ENCODE measurements at regions of chr4 and their contacts with region 1.

Region 1: GRCh38 chr4:8391972-8392371 is 48.6 kb downstream of the ACOX3 start:
- DNase-seq: peak in 7 of 10 donors; percentile 60 to 77 (median 68)
- H3K4me3 ChIP-seq: peak overlapping the region in 1 of 59 donors; percentile 22
- H3K27ac ChIP-seq: peak overlapping the region in 58 of 59 donors; percentile 10 to 99 (median 90)
- H3K27me3 ChIP-seq: no peaks in the 10 kb centered on the region
- CTCF ChIP-seq: peak in 3 of 56 donors; percentile 9 to 17 (median 11)

Region 2: DNA sequence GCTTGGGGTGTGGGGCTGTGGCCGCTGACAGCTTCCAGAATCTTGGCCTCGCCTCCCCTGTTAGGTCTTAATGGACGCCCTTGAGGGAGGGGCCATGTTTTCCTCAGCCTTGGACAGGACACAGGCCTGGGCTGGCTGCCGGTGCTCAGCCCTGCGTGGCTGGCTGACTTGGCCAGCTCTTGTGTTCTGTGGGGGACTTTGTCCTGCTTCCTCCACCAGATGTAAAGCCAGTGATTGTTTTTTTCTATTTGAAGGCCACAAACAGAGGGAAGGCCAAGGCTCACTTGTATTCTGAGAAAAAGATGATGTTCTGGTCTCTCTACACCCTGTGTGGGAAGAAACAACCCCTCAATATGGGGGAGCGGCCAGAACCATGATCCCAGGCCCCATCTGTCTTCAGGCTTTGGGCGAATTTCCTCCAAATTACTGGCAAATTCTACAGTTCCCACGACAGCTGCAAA is 51.2 kb before region 1 on chr4:
- intact Hi-C with region 1: loop called in 1 of 2 experiments (anchors 2 kb)
- DNase-seq: peak in 7 of 10 donors; percentile 32 to 75 (median 61)
- H3K4me3 ChIP-seq: no peak overlapping the region
- H3K27ac ChIP-seq: peak overlapping the region in 55 of 59 donors; percentile 23 to 87 (median 72)
- H3K27me3 ChIP-seq: no peaks in the 10 kb centered on the region
- CTCF ChIP-seq: no peak

Region 3: GRCh38 chr4:8351931-8352367 is 40.0 kb before region 1 on chr4:
- intact Hi-C with region 1: loop called in 1 of 2 experiments (anchors 5 kb)
- DNase-seq: peak in 7 of 10 donors; percentile 17 to 39 (median 28)
- H3K4me3 ChIP-seq: no peak overlapping the region
- H3K27ac ChIP-seq: peak overlapping the region in 7 of 59 donors; percentile 3 to 44 (median 26)
- H3K27me3 ChIP-seq: no peaks in the 10 kb centered on the region
- CTCF ChIP-seq: no peak

Measured in dorsolateral prefrontal cortex (tissue), 120 donors.